HepG2 (cell line): ENCODE measurements at regions of chr6 and their contacts with region 1.

Region 1: GRCh38 chr6:41920921-41921711 is at the starts of genes BYSL and MED20:
- DNase-seq: peak; percentile 92
- ATAC-seq: peak; percentile 91
- H3K4me3 ChIP-seq: peak within 1 kb of the TSS; percentile 80 to 93 (median 86)
- H3K27ac ChIP-seq: peak within 1 kb of the TSS; percentile 96
- H3K4me1 ChIP-seq: peaks cover 41% of the 10 kb centered on the region
- H3K27me3 ChIP-seq: no peaks in the 10 kb centered on the region; a peak in 1 of 5 replicates
- CTCF ChIP-seq: peak; percentile 96
- EP300 ChIP-seq: no peak; a peak in 1 of 4 replicates
- POLR2A ChIP-seq: peak; percentile 77 to 89
- RAD21 ChIP-seq: no peak; the same call in 1 of the 2 replicates
- total RNA-seq, gene BYSL: 27.9 and 37.3 TPM in 2 replicates
- total RNA-seq, gene MED20: 41.1 and 56.3 TPM in 2 replicates

Region 2: DNA sequence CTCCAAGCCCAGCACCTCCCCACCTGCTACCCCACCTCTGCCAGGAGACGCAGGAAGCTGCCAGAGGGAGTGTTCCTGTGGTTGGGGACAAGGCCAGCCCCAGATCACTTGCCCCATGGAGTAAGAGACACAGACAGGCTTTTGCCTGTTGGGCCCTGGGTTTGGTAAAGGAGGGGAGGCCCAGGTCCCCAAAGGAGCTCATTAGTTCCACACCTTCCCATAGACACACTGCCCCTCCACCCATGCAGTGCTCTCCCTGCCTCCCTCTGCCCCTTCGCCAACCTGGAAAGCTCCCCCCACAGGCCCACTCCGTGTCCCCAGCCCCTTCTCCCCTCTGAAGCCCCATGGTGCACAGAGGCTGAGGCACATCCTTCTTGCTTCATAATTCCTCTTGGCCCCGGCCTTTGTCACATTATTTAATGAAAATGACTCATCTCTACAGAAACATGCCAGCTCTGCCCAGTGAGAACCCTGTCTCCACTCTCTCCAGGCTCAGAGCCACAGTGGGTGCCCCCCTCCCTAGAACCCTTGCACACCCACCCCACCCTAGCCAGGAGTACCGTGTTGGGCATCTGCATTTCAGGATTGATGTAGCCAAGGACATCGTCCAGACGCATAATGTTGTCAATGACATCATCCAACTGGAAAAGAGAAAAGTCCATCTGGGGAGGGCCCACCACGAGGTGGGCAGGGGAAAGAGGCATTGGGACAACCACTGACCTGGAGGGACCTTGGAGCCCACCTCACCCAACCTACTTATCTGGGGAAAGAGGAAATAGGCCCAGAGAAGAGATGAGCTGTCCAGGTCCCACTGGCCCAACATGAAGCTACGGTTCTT is 231.7 kb before region 1 on chr6:
- CTCF ChIA-PET with region 1: no interaction called
- POLR2A ChIA-PET with region 1: no interaction called
- in situ Hi-C with region 1: no loop called
- intact Hi-C with region 1: no loop called
- DNase-seq: no peak
- ATAC-seq: no peak
- H3K4me3 ChIP-seq: no peak overlapping the region
- H3K27ac ChIP-seq: no peak overlapping the region
- H3K4me1 ChIP-seq: peaks cover 11% of the 10 kb centered on the region; the same call in 1 of the 2 replicates
- H3K27me3 ChIP-seq: no peaks in the 10 kb centered on the region
- CTCF ChIP-seq: no peak
- EP300 ChIP-seq: no peak
- POLR2A ChIP-seq: no peak
- RAD21 ChIP-seq: no peak

Region 3: GRCh38 chr6:41846666-41847237 is 74.4 kb before region 1 on chr6:
- CTCF ChIA-PET with region 1: no interaction called
- POLR2A ChIA-PET with region 1: interaction called, 11 read pairs
- in situ Hi-C with region 1: no loop called
- intact Hi-C with region 1: loop called (anchors 1 kb)
- DNase-seq: peak; percentile 93
- ATAC-seq: peak; percentile 100
- H3K4me3 ChIP-seq: peak overlapping the region in 1 of 3 experiments; percentile 24; a peak in 1 of 6 replicates
- H3K27ac ChIP-seq: peak overlapping the region; percentile 68
- H3K4me1 ChIP-seq: peaks cover 16% of the 10 kb centered on the region
- H3K27me3 ChIP-seq: no peaks in the 10 kb centered on the region
- CTCF ChIP-seq: peak; percentile 93
- EP300 ChIP-seq: no peak
- POLR2A ChIP-seq: peak in 1 of 2 experiments; percentile 34; a peak in 1 of 4 replicates
- RAD21 ChIP-seq: peak; percentile 85

Region 4: GRCh38 chr6:41936073-41936837 is 15.1 kb after region 1 on chr6:
- CTCF ChIA-PET with region 1: no interaction called
- POLR2A ChIA-PET with region 1: interaction called, 45 read pairs
- in situ Hi-C with region 1: no loop called
- intact Hi-C with region 1: loop called (anchors 1 kb)
- DNase-seq: peak; percentile 87
- ATAC-seq: peak; percentile 80
- H3K4me3 ChIP-seq: no peak overlapping the region
- H3K27ac ChIP-seq: peak overlapping the region; percentile 3
- H3K4me1 ChIP-seq: peaks cover 30% of the 10 kb centered on the region
- H3K27me3 ChIP-seq: no peaks in the 10 kb centered on the region
- CTCF ChIP-seq: peak; percentile 92
- EP300 ChIP-seq: peak in 1 of 2 experiments; percentile 13; a peak in 1 of 4 replicates
- POLR2A ChIP-seq: peak in 1 of 2 experiments; percentile 9; a peak in 1 of 4 replicates
- RAD21 ChIP-seq: peak; percentile 72

Region 5: DNA sequence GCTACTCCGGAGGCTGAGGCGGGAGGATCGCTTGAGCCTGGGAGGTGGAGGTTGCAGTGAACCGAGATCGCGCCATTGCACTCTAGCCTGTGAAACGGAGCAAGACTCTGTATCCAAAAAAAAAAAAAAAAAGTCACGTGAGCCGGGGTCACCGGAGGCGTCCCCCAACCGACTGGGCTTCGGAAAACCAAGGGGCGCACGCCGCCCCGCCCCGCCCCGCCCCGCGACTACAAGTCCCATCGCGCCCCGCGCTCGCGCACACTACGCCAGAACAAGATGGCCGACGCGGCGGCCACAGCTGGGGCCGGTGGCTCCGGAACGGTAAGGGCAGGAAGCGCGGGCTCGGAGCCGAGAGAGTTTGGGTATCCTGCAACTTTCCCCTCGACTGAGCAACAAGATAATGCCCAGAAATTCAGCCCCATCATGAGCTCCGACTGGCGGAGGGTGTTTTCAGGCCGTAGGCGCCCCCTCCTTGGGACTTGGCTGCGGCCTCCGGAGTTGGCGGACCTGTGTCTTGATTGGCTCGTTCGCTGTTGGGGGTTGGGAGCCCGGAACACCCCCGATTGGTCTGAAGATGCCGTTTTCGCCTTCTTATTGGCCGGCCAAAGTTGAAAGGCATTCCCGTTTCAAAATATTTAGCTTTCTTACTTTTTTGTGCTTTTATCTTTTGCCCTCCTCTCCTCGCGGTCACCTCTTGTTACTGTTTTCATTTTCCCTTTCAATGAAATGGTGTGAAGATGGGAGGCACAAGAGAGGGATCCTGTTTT is 129.3 kb after region 1 on chr6 and contains the start of gene TAF8:
- CTCF ChIA-PET with region 1: no interaction called
- POLR2A ChIA-PET with region 1: interaction called, 12 read pairs
- in situ Hi-C with region 1: no loop called
- intact Hi-C with region 1: loop called (anchors 2 kb)
- DNase-seq: peak; percentile 94
- ATAC-seq: peak; percentile 90
- H3K4me3 ChIP-seq: peak within 1 kb of the TSS; percentile 68 to 100 (median 99)
- H3K27ac ChIP-seq: peak within 1 kb of the TSS; percentile 96
- H3K4me1 ChIP-seq: peaks cover 53% of the 10 kb centered on the region
- H3K27me3 ChIP-seq: no peaks in the 10 kb centered on the region; a peak in 2 of 5 replicates
- CTCF ChIP-seq: peak; percentile 29; the same call in 1 of the 2 replicates
- EP300 ChIP-seq: peak; percentile 20 to 82; a peak in 1 of 4 replicates
- POLR2A ChIP-seq: peak; percentile 91 to 100
- RAD21 ChIP-seq: peak; percentile 57
- total RNA-seq, gene TAF8: 20.2 and 25.2 TPM in 2 replicates